ENCODE measurements at regions of chr4 and their contacts with region 1.

Region 1: GRCh38 chr4:38804654-38805295 is at the start of gene TLR1:
- DNase-seq: peak in 3 of 35 experiments; percentile 15 to 76 (median 27)
- ATAC-seq: peak; percentile 60 to 84 (median 78)
- H3K4me3 ChIP-seq: peak within 1 kb of the TSS; percentile 58 to 75
- H3K4me3 Mint-ChIP-seq: peak within 1 kb of the TSS; percentile 83 to 91 (median 85)
- H3K27ac ChIP-seq: peak within 1 kb of the TSS; percentile 75
- H3K27ac Mint-ChIP-seq: peak within 1 kb of the TSS; percentile 93 to 97
- H3K4me1 ChIP-seq: peaks cover 17 to 23% of the 10 kb centered on the region in 2 experiments
- H3K4me1 Mint-ChIP-seq: peaks cover 30 to 42% (median 42%) of the 10 kb centered on the region in 3 donors
- H3K27me3 ChIP-seq: no peaks in the 10 kb centered on the region
- H3K27me3 Mint-ChIP-seq: no peaks in the 10 kb centered on the region
- total RNA-seq, gene TLR1: 10.4 to 26.0 (median 18.0) TPM

Region 2: GRCh38 chr4:38759113-38759789 is 45.5 kb before region 1 on chr4:
- CTCF ChIA-PET with region 1: interaction called, 7 to 39 read pairs
- POLR2A ChIA-PET with region 1: no interaction called
- DNase-seq: peak in 30 of 35 experiments; percentile 19 to 82 (median 43)
- ATAC-seq: peak; percentile 61 to 85 (median 75)
- H3K4me3 ChIP-seq: no peak overlapping the region
- H3K4me3 Mint-ChIP-seq: no peak overlapping the region
- H3K27ac ChIP-seq: no peak overlapping the region
- H3K27ac Mint-ChIP-seq: peak overlapping the region in 1 of 2 donors; percentile 8
- H3K4me1 ChIP-seq: peaks cover 0 to 10% of the 10 kb centered on the region in 2 experiments
- H3K4me1 Mint-ChIP-seq: peaks cover 20 to 27% (median 24%) of the 10 kb centered on the region in 3 donors
- H3K27me3 ChIP-seq: peaks cover 0 to 2% of the 10 kb centered on the region in 2 experiments
- H3K27me3 Mint-ChIP-seq: no peaks in the 10 kb centered on the region